Activated CD4-positive, alpha-beta memory T cell treated with anti-CD3 and anti-CD28 coated beads for 36 hours (primary cell): ENCODE measurements at regions of chr17 and their contacts with region 1.

Region 1: GRCh38 chr17:66514227-66514806 is 211.9 kb downstream of the PRKCA start:
- DNase-seq: peak; percentile 60
- H3K4me3 Mint-ChIP-seq: no peak overlapping the region
- H3K27ac Mint-ChIP-seq: peak overlapping the region; percentile 51
- H3K4me1 Mint-ChIP-seq: peaks cover 86% of the 10 kb centered on the region
- H3K27me3 Mint-ChIP-seq: no peaks in the 10 kb centered on the region

Region 2: DNA sequence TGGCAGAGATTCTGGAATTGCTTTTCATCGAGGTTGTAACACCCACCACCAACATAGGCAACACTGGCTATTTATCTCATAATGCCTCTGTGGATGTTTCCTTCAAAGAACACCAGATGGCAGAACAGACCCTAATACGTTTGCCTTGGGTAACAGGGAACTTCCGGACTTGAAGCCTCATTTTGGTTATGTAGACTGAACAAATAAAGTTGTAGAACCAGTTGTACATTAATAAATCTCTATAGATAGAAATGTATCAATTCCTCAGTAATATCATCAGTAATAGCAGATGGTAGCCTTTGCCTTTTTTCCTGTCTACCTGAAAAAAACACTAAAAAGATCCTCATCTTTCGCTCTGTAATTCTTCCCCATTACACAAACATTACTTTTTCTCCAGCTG is 259.2 kb before region 1 on chr17:
- CTCF ChIA-PET with region 1: interaction called, 4 read pairs
- POLR2A ChIA-PET with region 1: no interaction called
- intact Hi-C with region 1: loop called (anchors 5 kb)
- DNase-seq: peak; percentile 28
- H3K4me3 Mint-ChIP-seq: peak overlapping the region; percentile 11
- H3K27ac Mint-ChIP-seq: peak overlapping the region; percentile 24
- H3K4me1 Mint-ChIP-seq: peaks cover 13% of the 10 kb centered on the region
- H3K27me3 Mint-ChIP-seq: no peaks in the 10 kb centered on the region

Region 3: GRCh38 chr17:66549731-66550207 is 35.5 kb after region 1 on chr17:
- CTCF ChIA-PET with region 1: interaction called, 3 read pairs
- POLR2A ChIA-PET with region 1: interaction called, 3 read pairs
- intact Hi-C with region 1: loop called (anchors 1 kb)
- DNase-seq: no peak
- H3K4me3 Mint-ChIP-seq: no peak overlapping the region
- H3K27ac Mint-ChIP-seq: no peak overlapping the region
- H3K4me1 Mint-ChIP-seq: peaks cover 56% of the 10 kb centered on the region
- H3K27me3 Mint-ChIP-seq: no peaks in the 10 kb centered on the region

Region 4: DNA sequence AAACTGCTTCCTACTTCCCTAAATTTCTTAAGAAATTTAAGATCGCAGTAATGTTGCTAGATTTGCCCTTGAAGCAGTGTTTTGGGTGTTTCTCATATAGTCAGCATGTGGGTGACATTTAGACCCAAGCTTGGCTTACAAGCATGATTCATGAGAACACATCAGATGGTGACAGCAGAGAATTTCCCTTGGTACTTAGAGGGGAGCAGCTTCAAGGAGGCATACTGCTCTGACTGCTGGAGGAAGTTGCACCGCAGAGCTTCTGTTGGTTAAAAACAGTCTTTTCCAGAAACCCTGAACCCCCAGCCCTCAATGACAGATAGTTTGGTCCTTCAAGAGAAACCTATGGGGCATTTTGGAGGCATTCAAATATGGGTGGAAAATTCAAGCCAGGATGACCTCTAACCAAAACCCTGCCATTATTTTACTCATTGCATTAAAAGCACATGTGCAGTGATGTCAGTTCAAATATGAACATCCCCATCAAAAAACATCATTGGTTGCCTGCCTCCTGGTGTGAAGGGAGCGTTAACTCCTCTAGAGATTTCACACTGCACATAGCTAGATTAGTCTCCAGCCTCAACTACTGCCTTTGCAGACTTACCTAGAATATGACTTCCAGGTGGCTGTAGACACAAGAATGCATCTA is 119.1 kb after region 1 on chr17:
- CTCF ChIA-PET with region 1: no interaction called
- POLR2A ChIA-PET with region 1: interaction called, 6 read pairs
- intact Hi-C with region 1: loop called (anchors 5 kb)
- DNase-seq: peak; percentile 70
- H3K4me3 Mint-ChIP-seq: no peak overlapping the region
- H3K27ac Mint-ChIP-seq: peak overlapping the region; percentile 61
- H3K4me1 Mint-ChIP-seq: peaks cover 55% of the 10 kb centered on the region
- H3K27me3 Mint-ChIP-seq: no peaks in the 10 kb centered on the region

Region 5: DNA sequence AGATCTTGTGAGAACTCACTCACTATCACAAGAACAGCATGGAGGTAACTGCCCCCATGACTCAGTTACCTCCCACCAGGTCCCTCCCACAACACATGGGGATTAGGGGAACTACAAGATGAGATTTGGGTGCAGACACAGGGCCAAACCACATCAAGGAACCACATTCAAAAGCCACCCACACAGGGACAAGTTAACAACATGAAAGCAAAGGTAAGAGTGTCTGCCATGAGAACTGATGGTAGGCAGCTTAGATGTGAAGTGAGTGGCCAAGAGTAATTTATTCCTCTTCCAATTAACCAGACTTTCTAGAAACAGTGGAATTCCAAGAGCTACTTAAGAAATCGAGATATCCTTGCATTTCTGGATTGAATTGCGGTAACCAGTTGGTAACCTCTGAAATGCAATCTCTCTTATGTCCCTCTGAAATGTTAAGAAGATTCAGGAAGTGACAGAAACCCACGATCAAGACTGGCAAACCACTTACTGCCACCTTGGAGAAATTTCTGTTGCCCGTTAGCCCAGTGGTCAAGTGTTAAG is 153.2 kb after region 1 on chr17:
- CTCF ChIA-PET with region 1: no interaction called
- POLR2A ChIA-PET with region 1: no interaction called
- intact Hi-C with region 1: loop called (anchors 2 kb)
- DNase-seq: peak; percentile 85
- H3K4me3 Mint-ChIP-seq: peak overlapping the region; percentile 31
- H3K27ac Mint-ChIP-seq: peak overlapping the region; percentile 69
- H3K4me1 Mint-ChIP-seq: peaks cover 80% of the 10 kb centered on the region
- H3K27me3 Mint-ChIP-seq: no peaks in the 10 kb centered on the region